Activated CD8-positive, alpha-beta T cell treated with anti-CD3 and anti-CD28 coated beads for 36 hours (primary cell): ENCODE measurements at regions of chr3 and their contacts with region 1.

Region 1: GRCh38 chr3:33636125-33636850 is 81.8 kb downstream of the CLASP2 start:
- DNase-seq: no peak
- ATAC-seq: peak; percentile 62
- H3K4me3 Mint-ChIP-seq: no peak overlapping the region
- H3K27ac Mint-ChIP-seq: no peak overlapping the region
- H3K4me1 Mint-ChIP-seq: peaks cover 5% of the 10 kb centered on the region
- H3K27me3 Mint-ChIP-seq: no peaks in the 10 kb centered on the region
- CTCF ChIP-seq: peak; percentile 74

Region 2: DNA sequence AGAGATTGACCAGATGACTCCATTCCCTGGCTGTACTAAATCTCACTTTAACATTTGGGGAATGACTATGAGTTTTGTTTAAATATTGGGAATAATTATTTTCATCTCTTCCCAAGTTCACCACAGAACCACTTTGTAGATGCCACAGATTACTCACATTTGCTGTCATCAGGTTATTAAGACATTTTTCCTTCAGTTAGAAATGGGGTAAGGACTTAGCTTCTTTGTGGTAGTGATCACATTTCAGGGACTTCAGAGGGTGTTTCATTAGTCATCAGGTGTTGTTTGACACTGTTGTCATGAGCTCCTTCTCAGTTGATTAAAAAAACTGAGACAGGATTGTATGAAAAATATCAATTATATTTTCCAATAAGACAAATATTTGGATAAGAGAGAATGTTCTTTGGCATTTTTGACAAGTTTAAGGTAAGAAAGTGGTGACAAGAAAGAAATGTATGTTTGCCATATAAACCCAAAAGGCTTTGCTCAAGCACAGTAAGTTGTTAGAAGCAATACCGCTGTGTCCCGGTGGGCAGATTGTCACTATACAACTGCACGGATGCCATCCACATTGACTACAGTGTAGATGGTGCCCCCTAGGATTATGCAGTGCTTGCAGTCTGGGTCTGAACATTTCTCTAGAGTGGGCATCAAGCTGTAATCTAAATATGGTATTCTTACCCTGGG is 336.8 kb before region 1 on chr3:
- CTCF ChIA-PET with region 1: no interaction called
- POLR2A ChIA-PET with region 1: no interaction called
- intact Hi-C with region 1: no loop called
- DNase-seq: no peak
- ATAC-seq: no peak
- H3K4me3 Mint-ChIP-seq: no peak overlapping the region
- H3K27ac Mint-ChIP-seq: no peak overlapping the region
- H3K4me1 Mint-ChIP-seq: no peaks in the 10 kb centered on the region
- H3K27me3 Mint-ChIP-seq: no peaks in the 10 kb centered on the region
- CTCF ChIP-seq: no peak

Region 3: GRCh38 chr3:33440323-33441232 is 195.7 kb before region 1 on chr3 and contains the start of gene UBP1:
- CTCF ChIA-PET with region 1: no interaction called
- POLR2A ChIA-PET with region 1: no interaction called
- intact Hi-C with region 1: no loop called
- DNase-seq: peak; percentile 99
- ATAC-seq: peak; percentile 90
- H3K4me3 Mint-ChIP-seq: peak within 1 kb of the TSS; percentile 94
- H3K27ac Mint-ChIP-seq: peak within 1 kb of the TSS; percentile 100
- H3K4me1 Mint-ChIP-seq: peaks cover 34% of the 10 kb centered on the region
- H3K27me3 Mint-ChIP-seq: no peaks in the 10 kb centered on the region
- CTCF ChIP-seq: no peak
- total RNA-seq, gene UBP1: 51.2 to 56.2 TPM

Region 4: DNA sequence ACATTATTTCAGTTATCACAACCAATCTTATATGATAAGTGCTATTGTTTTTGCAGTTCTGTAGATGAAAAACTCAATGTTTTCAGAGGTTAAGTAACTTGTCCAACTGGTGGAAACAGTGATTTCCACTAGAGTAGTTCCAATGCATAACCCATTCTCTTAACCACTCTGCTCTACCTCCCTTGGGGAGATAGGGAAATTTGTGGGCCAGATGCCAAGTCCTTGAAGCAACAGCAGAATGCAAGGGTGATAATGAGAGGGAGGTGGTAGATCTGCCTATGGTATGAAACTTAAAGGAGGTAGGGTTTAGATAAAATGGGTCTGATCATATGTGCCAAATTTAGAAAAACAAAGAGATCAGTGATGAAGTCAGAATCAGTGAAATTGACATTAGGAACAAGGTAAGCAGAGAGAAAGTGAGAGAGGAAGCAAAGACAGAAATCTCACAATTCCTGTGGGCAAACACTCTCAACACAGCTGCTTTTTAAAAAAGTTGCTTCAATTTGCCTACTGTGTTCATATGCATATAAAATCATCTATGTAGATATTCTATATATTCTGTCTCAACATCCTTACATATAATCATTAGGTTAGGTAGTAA is 145.5 kb before region 1 on chr3:
- CTCF ChIA-PET with region 1: no interaction called
- POLR2A ChIA-PET with region 1: no interaction called
- intact Hi-C with region 1: no loop called
- DNase-seq: no peak
- ATAC-seq: no peak
- H3K4me3 Mint-ChIP-seq: no peak overlapping the region
- H3K27ac Mint-ChIP-seq: no peak overlapping the region
- H3K4me1 Mint-ChIP-seq: no peaks in the 10 kb centered on the region
- H3K27me3 Mint-ChIP-seq: no peaks in the 10 kb centered on the region
- CTCF ChIP-seq: no peak

Region 5: DNA sequence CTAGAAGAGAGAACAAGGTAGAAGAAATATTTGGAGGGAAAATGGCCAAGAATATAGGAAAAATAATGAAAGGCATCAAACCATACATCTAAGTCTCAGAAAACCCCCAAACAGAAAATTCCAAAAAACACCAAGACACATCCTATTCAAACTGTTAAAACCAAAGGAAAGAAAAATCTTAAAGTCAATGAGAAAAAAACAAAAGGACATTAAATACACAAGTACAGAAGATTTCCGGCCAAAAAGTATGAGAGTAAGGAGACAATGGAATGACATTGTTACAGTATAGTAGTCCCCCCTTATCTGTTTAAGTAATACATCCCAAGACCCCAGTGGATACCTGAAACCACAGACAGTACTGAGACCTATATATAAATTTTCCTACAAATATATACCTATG is 63.0 kb after region 1 on chr3:
- CTCF ChIA-PET with region 1: no interaction called
- POLR2A ChIA-PET with region 1: no interaction called
- intact Hi-C with region 1: no loop called
- DNase-seq: no peak
- ATAC-seq: no peak
- H3K4me3 Mint-ChIP-seq: no peak overlapping the region
- H3K27ac Mint-ChIP-seq: no peak overlapping the region
- H3K4me1 Mint-ChIP-seq: peaks cover 17% of the 10 kb centered on the region
- H3K27me3 Mint-ChIP-seq: no peaks in the 10 kb centered on the region
- CTCF ChIP-seq: no peak

Region 6: DNA sequence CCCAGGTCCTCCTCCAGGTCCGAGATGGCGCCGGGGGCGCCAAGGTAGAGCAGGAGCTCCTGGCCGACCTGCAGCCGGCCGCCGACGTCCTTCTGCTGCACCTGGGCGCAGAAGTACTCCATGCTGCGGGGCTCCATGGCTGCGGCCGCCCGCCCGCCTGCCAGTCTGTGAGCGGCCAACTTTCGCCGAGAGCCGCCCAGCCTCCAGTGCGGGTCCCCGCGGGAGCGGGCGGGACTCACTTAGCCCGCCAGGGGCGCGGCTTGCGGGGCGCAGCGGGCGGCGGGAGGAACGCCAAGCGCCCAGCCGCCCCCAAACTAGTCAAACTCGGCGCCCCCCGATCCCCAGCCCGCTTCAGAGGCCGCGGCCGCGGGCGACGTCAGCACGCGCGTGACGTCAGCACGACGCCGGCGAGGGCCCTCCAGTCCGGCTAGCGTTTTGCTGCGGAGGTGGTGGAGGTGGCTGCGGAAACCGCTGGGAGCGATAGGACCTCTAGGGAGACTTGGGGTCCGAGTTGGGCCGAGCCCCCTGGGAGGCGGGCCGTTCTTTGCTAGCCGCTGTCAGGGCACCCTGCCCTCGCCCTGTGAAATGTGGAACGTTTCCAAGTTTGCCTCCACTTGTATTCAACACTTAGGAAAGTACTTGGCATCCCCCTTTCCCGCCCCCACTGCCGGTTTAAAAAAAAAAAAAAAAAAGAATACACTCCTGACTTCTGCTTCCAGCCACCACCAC is 81.7 kb after region 1 on chr3 and contains the start of gene CLASP2:
- CTCF ChIA-PET with region 1: no interaction called
- POLR2A ChIA-PET with region 1: interaction called, 4 read pairs
- intact Hi-C with region 1: loop called (anchors 5 kb)
- DNase-seq: peak; percentile 89
- ATAC-seq: peak; percentile 89
- H3K4me3 Mint-ChIP-seq: peak within 1 kb of the TSS; percentile 90
- H3K27ac Mint-ChIP-seq: peak within 1 kb of the TSS; percentile 95
- H3K4me1 Mint-ChIP-seq: peaks cover 11% of the 10 kb centered on the region
- H3K27me3 Mint-ChIP-seq: no peaks in the 10 kb centered on the region
- CTCF ChIP-seq: no peak
- total RNA-seq, gene CLASP2: 38.4 to 46.4 TPM

Region 7: GRCh38 chr3:33773637-33774036 is 137.3 kb after region 1 on chr3:
- CTCF ChIA-PET with region 1: interaction called, 28 read pairs
- POLR2A ChIA-PET with region 1: no interaction called
- intact Hi-C with region 1: no loop called
- DNase-seq: no peak
- ATAC-seq: no peak
- H3K4me3 Mint-ChIP-seq: no peak overlapping the region
- H3K27ac Mint-ChIP-seq: no peak overlapping the region
- H3K4me1 Mint-ChIP-seq: no peaks in the 10 kb centered on the region
- H3K27me3 Mint-ChIP-seq: no peaks in the 10 kb centered on the region
- CTCF ChIP-seq: no peak